Gastrocnemius medialis (tissue), 4 donors: ENCODE measurements at regions of chr2 and their contacts with region 1.

Region 1: GRCh38 chr2:102527086-102527485 is 54.1 kb downstream of the SLC9A4 start:
- DNase-seq: no peak
- ATAC-seq: no peak
- H3K4me3 ChIP-seq: no peak overlapping the region
- H3K27ac ChIP-seq: no peak overlapping the region
- H3K4me1 ChIP-seq: no peaks in the 10 kb centered on the region
- H3K27me3 ChIP-seq: no peaks in the 10 kb centered on the region
- CTCF ChIP-seq: no peak
- POLR2A ChIP-seq: no peak

Region 2: GRCh38 chr2:102070058-102070642 is 456.9 kb before region 1 on chr2:
- in situ Hi-C with region 1: no loop called
- intact Hi-C with region 1: no loop called
- DNase-seq: peak; percentile 88 to 97
- ATAC-seq: peak; percentile 78 to 87
- H3K4me3 ChIP-seq: peak overlapping the region; percentile 46 to 55 (median 52)
- H3K27ac ChIP-seq: peak overlapping the region; percentile 87 to 95 (median 92)
- H3K4me1 ChIP-seq: peaks cover 44 to 49% of the 10 kb centered on the region in 2 donors
- H3K27me3 ChIP-seq: no peaks in the 10 kb centered on the region
- CTCF ChIP-seq: peak in 2 of 5 experiments; percentile 13 to 28
- POLR2A ChIP-seq: peak in 1 of 2 donors; percentile 44

Region 3: DNA sequence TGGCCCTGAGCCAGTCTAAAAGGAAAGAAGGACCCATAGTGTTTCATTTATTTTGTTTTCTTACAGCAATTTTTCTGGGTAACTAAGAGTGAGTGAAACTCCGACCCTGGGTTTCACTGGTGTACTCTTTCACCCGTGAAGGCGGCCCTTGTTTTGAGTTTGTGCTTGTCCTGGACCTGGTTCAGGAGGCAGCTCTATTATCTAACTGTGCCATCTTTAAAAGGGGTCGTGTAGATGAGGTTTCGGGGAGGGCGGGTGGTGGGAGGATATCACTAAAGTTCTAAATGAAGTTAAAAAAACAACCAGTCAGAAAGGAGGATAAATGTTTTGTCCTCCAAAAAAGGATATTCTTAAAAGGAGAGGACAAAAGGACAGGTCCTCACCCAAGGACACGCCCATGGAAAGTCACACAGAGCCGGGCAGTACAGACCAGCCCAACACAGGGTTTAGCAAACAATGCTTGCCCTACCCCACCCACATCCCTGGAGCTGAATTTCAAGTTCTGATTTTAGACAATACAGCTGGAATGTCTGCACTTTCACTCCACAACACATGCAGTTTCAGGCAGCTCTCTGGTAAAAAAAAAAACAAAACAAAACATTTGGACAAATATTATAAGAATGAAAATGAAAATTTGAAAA is 13.7 kb after region 1 on chr2:
- in situ Hi-C with region 1: no loop called
- intact Hi-C with region 1: loop called (anchors 1 kb)
- DNase-seq: no peak
- ATAC-seq: no peak
- H3K4me3 ChIP-seq: no peak overlapping the region
- H3K27ac ChIP-seq: no peak overlapping the region
- H3K4me1 ChIP-seq: no peaks in the 10 kb centered on the region
- H3K27me3 ChIP-seq: no peaks in the 10 kb centered on the region
- CTCF ChIP-seq: no peak
- POLR2A ChIP-seq: no peak